ENCODE measurements at regions of chr9 and their contacts with region 1.

Region 1: DNA sequence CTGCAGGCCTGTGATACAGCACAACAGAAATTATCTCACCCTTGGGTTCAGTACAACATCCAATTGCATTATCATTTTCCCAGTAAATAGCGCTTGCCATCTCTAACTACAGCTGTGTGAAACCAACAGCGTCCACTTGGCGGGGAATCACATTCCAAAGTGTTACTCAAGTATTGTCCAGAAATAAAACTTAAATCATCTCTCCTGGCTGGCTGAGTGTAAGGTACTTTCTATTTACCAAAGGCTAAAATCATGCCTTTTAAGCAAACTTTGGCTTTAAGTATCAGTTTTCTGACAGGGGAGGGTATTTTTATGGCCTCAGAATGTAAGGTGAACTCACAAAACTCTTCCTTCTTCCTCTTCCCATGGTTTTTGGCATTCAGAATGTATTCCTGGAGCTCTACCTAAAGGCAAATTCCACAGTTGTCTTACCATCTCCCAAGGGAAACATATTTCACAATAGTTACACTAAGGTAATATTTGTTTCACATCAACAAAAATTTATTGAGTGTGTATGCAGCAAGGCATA is 205.6 kb upstream of the MPDZ start:
- DNase-seq: peak in 1 of 2 donors; percentile 77
- ATAC-seq: peak; percentile 89
- H3K4me3 ChIP-seq: no peak overlapping the region
- H3K27ac ChIP-seq: peak overlapping the region; percentile 28 to 43
- H3K4me1 ChIP-seq: peaks cover 3 to 4% of the 10 kb centered on the region in 2 donors
- H3K27me3 ChIP-seq: no peaks in the 10 kb centered on the region

Region 2: GRCh38 chr9:13568841-13569601 is 83.9 kb after region 1 on chr9:
- intact Hi-C with region 1: loop called in 1 of 2 experiments (anchors 10 kb)
- DNase-seq: no peak
- ATAC-seq: peak; percentile 10
- H3K4me3 ChIP-seq: peak overlapping the region in 1 of 2 donors; percentile 36
- H3K27ac ChIP-seq: peak overlapping the region; percentile 87 to 93
- H3K4me1 ChIP-seq: peaks cover 3 to 5% of the 10 kb centered on the region in 2 donors
- H3K27me3 ChIP-seq: no peaks in the 10 kb centered on the region

Measured in aorta (tissue), 5 donors.